ENCODE measurements at regions of chr6 and their contacts with region 1.

Region 1: DNA sequence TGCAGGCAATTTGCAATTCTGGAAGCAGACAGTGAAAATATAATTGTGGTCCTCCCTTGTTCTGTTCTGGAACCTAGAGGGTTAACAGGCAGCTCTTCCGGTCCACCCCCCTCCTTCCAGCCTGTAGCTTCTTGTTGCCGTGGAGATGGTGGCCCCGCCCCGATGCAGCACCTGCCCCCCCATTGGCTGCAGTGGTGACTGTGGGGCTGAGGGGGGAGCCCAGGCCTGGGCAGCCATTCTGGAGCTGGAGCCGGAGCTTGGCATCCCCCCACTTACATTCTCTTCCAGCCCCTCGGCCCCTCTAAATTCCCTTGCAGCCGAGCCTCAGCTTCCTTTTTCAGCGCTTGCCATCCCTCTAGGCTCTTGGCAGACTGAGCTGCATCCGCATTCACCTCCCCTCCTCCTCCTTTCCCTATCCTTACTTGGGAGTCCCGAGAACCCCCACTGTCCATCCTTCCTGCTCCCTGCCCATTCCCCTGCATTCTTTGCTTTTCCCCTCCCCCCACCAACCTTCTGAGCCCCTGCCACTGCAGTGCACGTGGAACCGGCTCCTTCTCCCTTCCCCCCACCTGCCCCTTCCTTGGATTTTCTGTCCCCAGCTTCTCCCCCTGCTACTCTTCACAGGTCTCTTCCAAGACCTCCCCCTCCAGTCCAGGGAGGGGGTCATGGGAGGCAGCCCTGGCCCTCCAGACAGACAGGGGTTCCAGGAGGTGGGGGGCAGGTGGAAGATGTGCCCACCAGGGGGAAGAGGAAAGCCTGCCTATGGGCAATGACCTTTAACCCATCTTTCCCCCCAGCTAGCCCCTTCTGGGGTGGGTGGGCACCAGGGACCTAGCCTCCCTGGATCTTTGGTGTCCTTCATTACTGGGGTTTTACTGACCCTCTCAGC is 11.4 kb downstream of the SYNGAP1 start:
- DNase-seq: peak; percentile 89
- H3K4me3 ChIP-seq: peak overlapping the region; percentile 68
- H3K27ac ChIP-seq: peak overlapping the region; percentile 64
- H3K4me1 ChIP-seq: peaks cover 65% of the 10 kb centered on the region
- CTCF ChIP-seq: 0 out of 2 replicates have a peak, but pooled peaks have one; percentile 19

Region 2: GRCh38 chr6:33410050-33410710 is 21.1 kb before region 1 on chr6:
- CTCF ChIA-PET with region 1: interaction called, 14 read pairs
- POLR2A ChIA-PET with region 1: no interaction called
- intact Hi-C with region 1: no loop called
- DNase-seq: peak; percentile 97
- H3K4me3 ChIP-seq: peak overlapping the region; percentile 81
- H3K27ac ChIP-seq: peak overlapping the region; percentile 85
- H3K4me1 ChIP-seq: peaks cover 40% of the 10 kb centered on the region
- CTCF ChIP-seq: no peak

Region 3: GRCh38 chr6:33417903-33418689 is 13.1 kb before region 1 on chr6 and contains the start of gene CUTA:
- CTCF ChIA-PET with region 1: interaction called, 3 read pairs
- POLR2A ChIA-PET with region 1: interaction called, 5 read pairs
- intact Hi-C with region 1: loop called (anchors 1 kb)
- DNase-seq: peak; percentile 100
- H3K4me3 ChIP-seq: peak within 1 kb of the TSS; percentile 77
- H3K27ac ChIP-seq: peak within 1 kb of the TSS; percentile 76
- H3K4me1 ChIP-seq: peaks cover 56% of the 10 kb centered on the region
- CTCF ChIP-seq: peak; percentile 80
- total RNA-seq, gene CUTA: 147 and 164 TPM in 2 replicates

Region 4: GRCh38 chr6:33454009-33454946 is 23.0 kb after region 1 on chr6 and contains the start of gene ZBTB9:
- CTCF ChIA-PET with region 1: interaction called, 6 read pairs
- POLR2A ChIA-PET with region 1: interaction called, 7 read pairs
- intact Hi-C with region 1: loop called (anchors 1 kb)
- DNase-seq: peak; percentile 97
- H3K4me3 ChIP-seq: peak within 1 kb of the TSS; percentile 77
- H3K27ac ChIP-seq: peak within 1 kb of the TSS; percentile 30
- H3K4me1 ChIP-seq: peaks cover 19% of the 10 kb centered on the region
- CTCF ChIP-seq: no peak
- total RNA-seq, gene ZBTB9: 7.7 and 11.2 TPM in 2 replicates

Measured in OCI-LY7 (cell line).